ENCODE measurements at regions of chr22 and their contacts with region 1.

Region 1: GRCh38 chr22:27919222-27919941 is at the start of gene PITPNB:
- DNase-seq: peak; percentile 98
- H3K4me3 Mint-ChIP-seq: peak within 1 kb of the TSS; percentile 99
- H3K27ac Mint-ChIP-seq: peak within 1 kb of the TSS; percentile 100
- H3K4me1 Mint-ChIP-seq: peaks cover 65% of the 10 kb centered on the region
- H3K27me3 Mint-ChIP-seq: peaks cover 5% of the 10 kb centered on the region
- total RNA-seq, gene PITPNB: 153 and 154 TPM in 2 replicates

Region 2: GRCh38 chr22:27866132-27867086 is 53.0 kb before region 1 on chr22:
- intact Hi-C with region 1: loop called (anchors 1 kb)
- DNase-seq: no peak
- H3K4me3 Mint-ChIP-seq: peak overlapping the region; percentile 48
- H3K27ac Mint-ChIP-seq: peak overlapping the region; percentile 86
- H3K4me1 Mint-ChIP-seq: peaks cover 65% of the 10 kb centered on the region
- H3K27me3 Mint-ChIP-seq: no peaks in the 10 kb centered on the region

Region 3: DNA sequence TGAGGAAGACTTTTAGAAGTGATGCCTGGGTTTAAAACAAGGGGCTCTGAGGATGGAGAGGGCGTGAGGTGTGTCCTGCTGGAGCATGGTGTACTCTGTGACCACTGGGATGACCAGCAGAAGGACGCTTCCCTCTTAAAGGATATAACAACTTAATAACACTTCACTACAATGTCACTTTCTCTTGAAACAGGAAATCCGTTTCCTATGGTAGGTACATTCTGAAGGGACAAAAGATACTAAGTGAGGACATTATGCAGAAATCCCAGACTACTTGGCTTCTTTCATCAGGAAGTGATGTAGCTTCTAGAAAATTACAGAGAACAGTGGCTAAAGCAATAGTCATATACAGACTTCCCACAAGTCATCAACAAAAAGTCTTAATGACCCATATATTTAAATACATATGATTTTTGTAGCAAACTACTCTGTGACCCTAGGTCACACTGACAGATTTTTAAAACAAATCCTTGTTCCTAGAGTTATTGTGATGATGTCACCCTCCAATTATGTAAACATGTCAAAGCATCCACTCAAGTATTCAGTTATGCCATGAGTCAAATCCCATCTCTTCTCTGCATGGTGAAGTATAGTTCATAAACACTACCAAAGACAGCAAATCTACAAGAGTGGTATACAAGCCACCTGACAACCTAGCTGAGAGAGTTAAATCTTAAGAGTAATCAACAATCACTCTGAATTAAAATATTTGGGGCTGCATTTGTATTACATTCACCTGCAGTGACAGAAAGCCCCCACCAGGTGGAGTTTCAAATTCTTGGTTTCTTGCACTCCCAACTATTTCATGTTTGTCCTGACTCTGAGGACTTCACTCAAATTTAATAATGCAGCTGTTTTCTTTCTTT is 33.2 kb before region 1 on chr22:
- intact Hi-C with region 1: loop called (anchors 2 kb)
- DNase-seq: no peak
- H3K4me3 Mint-ChIP-seq: no peak overlapping the region
- H3K27ac Mint-ChIP-seq: no peak overlapping the region
- H3K4me1 Mint-ChIP-seq: peaks cover 30% of the 10 kb centered on the region
- H3K27me3 Mint-ChIP-seq: no peaks in the 10 kb centered on the region

Region 4: GRCh38 chr22:27903805-27904473 is 15.4 kb before region 1 on chr22:
- intact Hi-C with region 1: loop called (anchors 2 kb)
- DNase-seq: no peak
- H3K4me3 Mint-ChIP-seq: peak overlapping the region; percentile 15
- H3K27ac Mint-ChIP-seq: peak overlapping the region; percentile 61
- H3K4me1 Mint-ChIP-seq: peaks cover 53% of the 10 kb centered on the region
- H3K27me3 Mint-ChIP-seq: no peaks in the 10 kb centered on the region

Region 5: GRCh38 chr22:27937453-27937852 is 18.1 kb after region 1 on chr22:
- intact Hi-C with region 1: no loop called
- DNase-seq: no peak
- H3K4me3 Mint-ChIP-seq: no peak overlapping the region
- H3K27ac Mint-ChIP-seq: no peak overlapping the region
- H3K4me1 Mint-ChIP-seq: no peaks in the 10 kb centered on the region
- H3K27me3 Mint-ChIP-seq: no peaks in the 10 kb centered on the region

Region 6: GRCh38 chr22:28741758-28742561 is 822.6 kb after region 1 on chr22 and contains the starts of genes CHEK2 and HSCB:
- intact Hi-C with region 1: loop called (anchors 1 kb)
- DNase-seq: peak; percentile 97
- H3K4me3 Mint-ChIP-seq: peak within 1 kb of the TSS; percentile 86
- H3K27ac Mint-ChIP-seq: peak within 1 kb of the TSS; percentile 70
- H3K4me1 Mint-ChIP-seq: peaks cover 42% of the 10 kb centered on the region
- H3K27me3 Mint-ChIP-seq: no peaks in the 10 kb centered on the region
- total RNA-seq, gene CHEK2: 31.4 and 35.0 TPM in 2 replicates
- total RNA-seq, gene HSCB: 16.6 and 18.0 TPM in 2 replicates

Region 7: GRCh38 chr22:29267858-29268417 is 1348.6 kb after region 1 on chr22 and contains the starts of genes EWSR1 and RHBDD3:
- intact Hi-C with region 1: loop called (anchors 2 kb)
- DNase-seq: peak; percentile 97
- H3K4me3 Mint-ChIP-seq: peak within 1 kb of the TSS; percentile 96
- H3K27ac Mint-ChIP-seq: peak within 1 kb of the TSS; percentile 99
- H3K4me1 Mint-ChIP-seq: peaks cover 49% of the 10 kb centered on the region
- H3K27me3 Mint-ChIP-seq: no peaks in the 10 kb centered on the region
- total RNA-seq, gene EWSR1: 454 and 463 TPM in 2 replicates
- total RNA-seq, gene RHBDD3: 53.3 and 59.4 TPM in 2 replicates

Measured in activated T-helper 1 cell treated with anti-CD3 and anti-CD28 coated beads, Interleukin-12 subunit alpha, Interleukin-12 subunit beta, Interleukin-2, Interleukin-4 antibody, amounts not matched to agents 30 ng/mL and 10 ng/mL and 1 ng/mL, durations not matched to agents 14 hours and 24 hours and 36 hours (primary cell).